ENCODE measurements at regions of chr4 and their contacts with region 1.

Region 1: DNA sequence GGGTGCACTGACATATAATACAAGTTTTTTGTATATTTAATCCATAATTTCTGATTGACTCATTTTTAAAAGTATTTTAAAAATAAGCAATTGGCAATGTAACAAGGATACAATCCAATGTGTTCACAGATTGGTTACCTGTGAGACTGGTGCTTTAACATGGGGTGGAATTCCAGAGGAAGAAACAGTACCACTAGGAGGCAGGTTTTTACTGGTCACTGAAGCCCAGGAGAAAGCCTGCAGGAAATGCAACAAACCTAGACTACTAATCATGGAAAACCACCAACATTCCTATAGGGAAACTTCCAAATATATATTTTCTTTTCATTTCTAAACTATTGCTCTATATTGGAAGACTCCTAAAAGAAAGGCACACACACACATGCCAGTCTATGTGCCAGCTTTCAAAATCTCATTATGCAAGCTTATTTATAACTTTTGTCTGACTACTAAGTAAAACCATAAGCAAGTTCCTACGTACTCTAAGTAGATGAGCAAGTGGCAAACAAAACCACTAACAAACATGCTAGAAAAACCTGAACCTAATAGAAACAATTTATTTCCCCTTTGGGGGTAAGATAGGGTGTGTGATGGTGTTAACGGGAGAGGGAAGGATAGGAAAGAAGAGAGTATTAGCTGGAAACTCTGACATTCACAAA is 19.2 kb downstream of the G3BP2 start:
- DNase-seq: no peak
- H3K4me3 ChIP-seq: no peak overlapping the region
- H3K27ac ChIP-seq: no peak overlapping the region
- H3K4me1 ChIP-seq: peaks cover 5% of the 10 kb centered on the region
- H3K27me3 ChIP-seq: no peaks in the 10 kb centered on the region
- CTCF ChIP-seq: peak; percentile 60

Region 2: GRCh38 chr4:75745161-75745560 is 91.2 kb after region 1 on chr4:
- intact Hi-C with region 1: no loop called
- DNase-seq: no peak
- H3K4me3 ChIP-seq: no peak overlapping the region
- H3K27ac ChIP-seq: peak overlapping the region; percentile 63
- H3K4me1 ChIP-seq: peaks cover 37% of the 10 kb centered on the region
- H3K27me3 ChIP-seq: no peaks in the 10 kb centered on the region
- CTCF ChIP-seq: no peak

Region 3: DNA sequence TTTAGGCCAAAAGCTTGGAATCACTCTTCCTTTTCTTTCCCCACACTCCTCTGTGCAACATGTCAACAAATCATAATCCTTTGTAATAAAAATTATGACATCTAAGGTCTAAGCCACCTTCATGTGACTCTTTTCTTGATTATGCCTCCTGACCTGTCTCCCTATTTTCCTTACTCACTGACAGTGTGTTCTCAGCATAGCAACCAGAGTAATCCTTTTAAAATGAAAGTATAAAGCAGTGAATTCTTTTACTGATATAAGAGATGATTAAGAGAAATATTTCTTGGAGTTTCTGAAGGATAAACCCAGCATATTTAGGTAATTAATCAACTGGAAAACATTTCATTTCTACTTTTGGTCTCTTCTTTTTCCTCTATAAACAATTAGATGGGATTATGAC is 115.1 kb after region 1 on chr4:
- intact Hi-C with region 1: loop called (anchors 10 kb)
- DNase-seq: no peak
- H3K4me3 ChIP-seq: no peak overlapping the region
- H3K27ac ChIP-seq: no peak overlapping the region
- H3K4me1 ChIP-seq: peaks cover 12% of the 10 kb centered on the region
- H3K27me3 ChIP-seq: no peaks in the 10 kb centered on the region
- CTCF ChIP-seq: no peak

Region 4: GRCh38 chr4:75973766-75974165 is 319.8 kb after region 1 on chr4:
- intact Hi-C with region 1: loop called (anchors 10 kb)
- DNase-seq: no peak
- H3K4me3 ChIP-seq: no peak overlapping the region
- H3K27ac ChIP-seq: no peak overlapping the region
- H3K4me1 ChIP-seq: no peaks in the 10 kb centered on the region
- H3K27me3 ChIP-seq: no peaks in the 10 kb centered on the region
- CTCF ChIP-seq: no peak

Measured in left ventricle myocardium inferior (tissue), 1 donor.